GM10248 (cell line): ENCODE measurements at regions of chr3 and their contacts with region 1.

Region 1: DNA sequence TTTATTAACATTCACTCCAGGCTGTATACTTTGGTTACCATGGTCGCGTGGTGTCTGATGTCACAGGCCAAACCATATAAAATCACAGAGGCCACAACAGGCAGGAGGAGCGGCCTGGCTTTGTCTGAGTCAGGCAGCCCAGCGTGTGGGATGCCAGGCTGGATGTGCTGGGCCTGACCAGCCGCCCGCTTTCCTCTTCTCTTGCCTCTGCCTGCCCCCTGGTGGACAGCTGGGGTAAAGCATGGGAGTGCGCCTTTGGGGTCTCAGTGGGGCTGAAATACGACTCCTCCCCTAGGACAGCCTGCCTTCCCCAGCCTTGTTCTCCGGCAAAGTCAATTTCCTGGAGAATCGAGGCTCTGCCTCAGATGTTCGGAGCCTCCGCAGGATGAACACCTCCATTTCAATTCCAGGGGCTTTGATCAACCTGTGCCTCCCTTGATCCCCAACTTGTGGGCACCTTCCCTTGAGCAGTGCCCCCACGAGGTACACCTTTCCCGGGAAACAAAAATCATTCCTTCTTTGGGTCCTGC is 78.2 kb downstream of the CCNL1 start:
- DNase-seq: peak; percentile 76
- CTCF ChIP-seq: peak; percentile 94

Region 2: GRCh38 chr3:156542715-156543555 is 538.8 kb before region 1 on chr3:
- CTCF ChIA-PET with region 1: interaction called, 11 read pairs
- POLR2A ChIA-PET with region 1: no interaction called
- DNase-seq: no peak
- CTCF ChIP-seq: no peak

Region 3: DNA sequence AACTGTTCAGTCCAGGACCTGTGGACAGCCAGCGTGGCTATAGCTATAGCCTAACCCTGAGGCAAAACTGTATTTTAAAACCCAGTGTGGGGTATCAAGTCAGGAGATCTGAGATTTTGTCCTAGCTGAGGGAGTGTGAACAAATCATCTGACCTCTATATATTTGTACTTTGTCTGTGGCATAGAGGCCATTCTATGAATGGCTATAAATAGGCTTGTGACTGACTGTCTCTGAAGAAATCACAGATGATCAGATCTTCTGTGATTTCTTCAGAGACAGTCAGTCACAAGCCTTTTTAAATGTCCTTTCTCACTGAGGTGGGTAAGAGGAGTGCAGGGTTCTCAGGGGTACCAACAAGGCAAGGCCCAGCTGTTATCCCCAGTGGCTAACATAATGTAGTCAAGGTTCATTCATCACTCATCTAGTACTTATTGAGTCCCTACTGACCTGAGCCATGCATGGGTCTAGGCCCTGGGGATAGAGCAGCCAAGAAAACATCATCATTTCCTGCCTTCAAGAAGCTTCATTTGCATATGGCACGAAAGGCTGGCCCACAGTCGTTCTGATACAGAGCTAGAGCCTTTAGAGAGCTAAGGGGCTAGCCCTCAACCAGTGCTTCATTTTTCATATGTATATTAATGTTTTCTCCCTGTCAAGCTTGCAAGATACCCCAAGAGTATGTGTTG is 354.1 kb before region 1 on chr3:
- CTCF ChIA-PET with region 1: interaction called, 10 read pairs
- POLR2A ChIA-PET with region 1: no interaction called
- DNase-seq: no peak
- CTCF ChIP-seq: no peak

Region 4: DNA sequence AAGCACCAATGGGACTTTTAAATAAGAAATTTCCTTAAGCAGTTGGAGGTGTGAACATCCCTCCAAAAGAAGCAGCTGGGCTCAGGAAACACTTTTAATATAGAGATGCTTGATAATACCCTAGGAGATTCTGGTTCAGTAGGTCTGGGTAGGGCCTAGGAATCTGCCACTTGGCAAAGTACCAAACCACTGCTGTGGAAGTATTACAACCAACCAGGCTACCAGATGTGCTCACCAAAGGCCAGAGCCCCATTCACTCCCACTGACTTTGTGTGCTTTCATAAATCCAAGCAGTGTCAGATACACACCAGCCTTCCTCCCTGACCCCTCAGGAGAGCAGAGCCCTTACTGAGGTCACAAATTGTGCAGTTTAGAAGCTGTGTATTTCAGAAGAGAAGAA is 84.4 kb before region 1 on chr3:
- CTCF ChIA-PET with region 1: interaction called, 12 read pairs
- POLR2A ChIA-PET with region 1: no interaction called
- DNase-seq: no peak
- CTCF ChIP-seq: no peak

Region 5: DNA sequence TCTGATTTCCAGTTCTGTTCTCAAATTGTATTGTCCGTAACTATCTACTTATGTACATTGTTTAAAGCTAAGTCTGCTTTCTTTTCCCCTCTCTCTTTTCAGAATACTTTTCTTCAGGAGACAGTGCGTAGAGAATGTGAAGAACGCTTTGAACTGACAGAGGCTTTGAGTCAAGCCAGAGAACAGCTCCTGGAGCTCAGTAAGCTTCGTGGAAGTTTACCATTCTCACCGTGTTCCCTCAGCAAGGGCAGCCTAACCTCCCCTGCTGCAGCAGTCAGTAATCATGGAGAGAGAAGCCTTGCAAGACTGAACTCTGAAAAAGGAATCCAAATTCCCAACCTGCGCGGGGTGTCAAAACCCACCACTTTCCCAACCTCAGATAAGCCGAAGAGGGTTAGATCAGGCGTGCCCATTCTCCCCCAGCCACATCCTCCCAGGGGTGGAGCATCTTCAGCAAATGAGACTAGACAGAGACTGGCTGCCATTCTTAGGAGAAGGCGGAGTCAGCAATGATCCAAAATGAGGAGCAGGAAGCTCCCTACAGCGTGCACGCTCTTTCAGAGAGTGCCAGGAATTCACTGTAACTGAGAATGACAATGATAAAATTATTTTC is 36.4 kb before region 1 on chr3:
- CTCF ChIA-PET with region 1: no interaction called
- POLR2A ChIA-PET with region 1: no interaction called
- DNase-seq: no peak
- CTCF ChIP-seq: no peak

Region 6: GRCh38 chr3:157070678-157070999 is 11.1 kb before region 1 on chr3:
- CTCF ChIA-PET with region 1: interaction called, 47 read pairs
- POLR2A ChIA-PET with region 1: no interaction called
- DNase-seq: no peak
- CTCF ChIP-seq: no peak

Region 7: DNA sequence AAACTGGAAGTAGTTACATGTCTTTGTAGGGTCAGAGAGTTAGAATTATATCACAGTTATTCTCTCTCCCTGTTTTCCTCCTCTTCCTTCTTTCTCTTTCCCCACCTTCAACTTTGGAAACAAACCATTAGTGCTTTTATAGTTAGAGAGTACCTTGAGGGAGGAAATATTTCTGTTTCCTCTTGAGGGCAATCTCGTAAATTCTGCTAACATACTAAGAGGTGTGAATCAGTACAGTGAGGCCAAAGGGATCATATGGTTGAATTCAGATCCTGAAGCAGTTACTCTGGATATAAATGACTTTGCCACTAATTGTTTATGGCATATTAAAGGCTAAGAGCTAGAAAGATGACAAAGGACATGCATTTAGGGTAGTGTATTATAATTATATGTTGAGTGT is 138.5 kb after region 1 on chr3:
- CTCF ChIA-PET with region 1: no interaction called
- POLR2A ChIA-PET with region 1: no interaction called
- DNase-seq: no peak
- CTCF ChIP-seq: no peak